ENCODE measurements at regions of chrX and their contacts with region 1.

Region 1: GRCh38 chrX:106170318-106170717 is 2.2 kb downstream of the PWWP3B start:
- DNase-seq: peak in 2 of 10 donors; percentile 2 to 49

Region 2: GRCh38 chrX:106039920-106040319 is 130.4 kb before region 1 on chrX:
- intact Hi-C with region 1: no loop called
- DNase-seq: peak in 1 of 10 donors; percentile 1

Region 3: DNA sequence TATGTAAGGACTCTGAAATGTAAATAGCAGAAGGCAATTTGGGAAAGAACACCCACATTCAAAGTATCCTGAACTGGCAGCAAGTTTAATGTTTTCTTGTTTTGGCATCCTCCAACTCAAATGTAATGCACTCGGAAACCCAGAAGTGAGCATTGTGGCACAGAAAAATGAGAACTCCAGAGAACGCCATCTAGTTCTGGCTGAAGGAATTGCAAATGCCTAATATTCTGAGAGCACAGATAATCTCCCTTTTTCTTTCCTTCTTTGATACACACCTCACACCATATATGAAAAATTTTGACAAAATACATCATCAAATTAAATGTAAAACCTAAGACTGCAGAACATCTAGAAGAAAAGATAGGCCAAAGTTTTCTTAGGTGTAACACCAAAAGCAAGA is 49.9 kb after region 1 on chrX:
- intact Hi-C with region 1: loop called (anchors 5 kb)
- DNase-seq: no peak

Region 4: GRCh38 chrX:106397801-106398538 is 227.7 kb after region 1 on chrX:
- intact Hi-C with region 1: loop called (anchors 10 kb)
- DNase-seq: no peak